Dendritic cell treated with granulocyte-macrophage colony-stimulating factor and Interleukin-4, amounts not matched to agents 40 ng/mL and 50 ng/mL, for 4 days (primary cell): ENCODE measurements at regions of chr7 and their contacts with region 1.

Region 1: GRCh38 chr7:12244129-12244528 is 33.0 kb downstream of the TMEM106B start:
- H3K4me3 Mint-ChIP-seq: no peak overlapping the region
- H3K27ac Mint-ChIP-seq: no peak overlapping the region
- H3K4me1 Mint-ChIP-seq: peaks cover 6% of the 10 kb centered on the region
- H3K27me3 Mint-ChIP-seq: no peaks in the 10 kb centered on the region

Region 2: GRCh38 chr7:12211054-12211710 is 32.9 kb before region 1 on chr7 and contains the start of gene TMEM106B:
- intact Hi-C with region 1: loop called (anchors 1 kb)
- H3K4me3 Mint-ChIP-seq: peak within 1 kb of the TSS; percentile 84
- H3K27ac Mint-ChIP-seq: peak within 1 kb of the TSS; percentile 92
- H3K4me1 Mint-ChIP-seq: peaks cover 18% of the 10 kb centered on the region
- H3K27me3 Mint-ChIP-seq: peaks cover 27% of the 10 kb centered on the region

Region 3: DNA sequence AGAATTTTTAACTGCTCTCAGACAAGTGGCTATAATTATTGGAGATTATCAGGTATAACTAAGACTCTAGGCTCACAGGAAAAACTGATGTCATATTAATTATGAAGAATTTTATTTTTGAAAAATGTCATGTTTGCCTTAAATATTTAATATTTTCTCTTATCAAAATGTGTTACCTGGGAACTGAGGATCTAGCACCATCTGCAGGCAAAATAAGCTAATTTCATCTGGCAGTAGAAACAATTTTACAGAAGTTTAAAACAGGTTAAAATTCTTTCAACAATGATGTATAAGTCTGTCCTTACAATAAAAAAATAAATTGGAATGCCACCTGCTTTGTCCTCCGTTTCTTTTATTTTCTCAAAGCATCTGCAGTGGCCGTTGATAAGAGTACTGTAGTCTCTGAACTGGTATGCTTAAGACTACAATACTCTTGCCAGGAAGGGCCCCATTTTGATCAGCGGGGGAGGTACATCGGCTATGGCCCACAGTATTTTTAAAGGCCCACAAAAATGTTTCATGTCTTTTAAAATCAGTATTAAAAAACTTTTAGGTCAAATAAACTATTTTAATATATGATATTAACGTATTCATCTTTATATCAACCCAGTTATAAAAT is 78.3 kb after region 1 on chr7:
- intact Hi-C with region 1: no loop called
- H3K4me3 Mint-ChIP-seq: no peak overlapping the region
- H3K27ac Mint-ChIP-seq: no peak overlapping the region
- H3K4me1 Mint-ChIP-seq: no peaks in the 10 kb centered on the region
- H3K27me3 Mint-ChIP-seq: peaks cover 4% of the 10 kb centered on the region

Region 4: DNA sequence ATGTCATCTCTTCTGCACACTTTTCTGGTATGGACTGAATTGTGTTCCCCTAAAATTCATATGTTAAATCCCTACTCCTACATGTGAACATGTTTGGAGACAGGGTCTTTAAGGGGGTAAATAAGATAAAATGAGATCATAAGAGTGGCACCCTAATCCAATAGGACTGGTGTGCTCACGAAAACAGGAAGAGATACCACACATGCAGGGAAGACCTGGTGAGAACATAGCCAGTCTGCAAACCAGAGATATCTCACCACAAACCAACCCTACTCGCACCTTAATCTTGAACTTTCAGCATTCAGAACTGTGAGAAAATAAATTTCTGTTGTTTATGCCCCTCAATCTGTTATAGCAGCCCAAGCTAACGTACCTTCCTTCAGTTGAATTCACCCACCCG is 107.7 kb after region 1 on chr7:
- intact Hi-C with region 1: no loop called
- H3K4me3 Mint-ChIP-seq: no peak overlapping the region
- H3K27ac Mint-ChIP-seq: no peak overlapping the region
- H3K4me1 Mint-ChIP-seq: no peaks in the 10 kb centered on the region
- H3K27me3 Mint-ChIP-seq: no peaks in the 10 kb centered on the region

Region 5: GRCh38 chr7:12386313-12386740 is 142.2 kb after region 1 on chr7:
- intact Hi-C with region 1: no loop called
- H3K4me3 Mint-ChIP-seq: no peak overlapping the region
- H3K27ac Mint-ChIP-seq: no peak overlapping the region
- H3K4me1 Mint-ChIP-seq: peaks cover 5% of the 10 kb centered on the region
- H3K27me3 Mint-ChIP-seq: no peaks in the 10 kb centered on the region

Region 6: GRCh38 chr7:12821746-12822145 is 577.6 kb after region 1 on chr7:
- intact Hi-C with region 1: no loop called
- H3K4me3 Mint-ChIP-seq: no peak overlapping the region
- H3K27ac Mint-ChIP-seq: no peak overlapping the region
- H3K4me1 Mint-ChIP-seq: no peaks in the 10 kb centered on the region
- H3K27me3 Mint-ChIP-seq: no peaks in the 10 kb centered on the region